Activated CD4-positive, alpha-beta T cell treated with anti-CD3 and anti-CD28 coated beads for 36 hours (primary cell): ENCODE measurements at regions of chr7 and their contacts with region 1.

Region 1: GRCh38 chr7:104923010-104923421 is 91.0 kb upstream of the KMT2E start:
- DNase-seq: peak; percentile 89
- ATAC-seq: peak; percentile 99
- H3K4me3 Mint-ChIP-seq: no peak overlapping the region
- H3K27ac Mint-ChIP-seq: peak overlapping the region; percentile 59
- H3K4me1 Mint-ChIP-seq: peaks cover 4% of the 10 kb centered on the region
- H3K27me3 Mint-ChIP-seq: no peaks in the 10 kb centered on the region

Region 2: GRCh38 chr7:104643587-104644217 is 279.3 kb before region 1 on chr7:
- CTCF ChIA-PET with region 1: interaction called, 5 read pairs
- POLR2A ChIA-PET with region 1: no interaction called
- intact Hi-C with region 1: loop called (anchors 5 kb)
- DNase-seq: peak; percentile 22
- ATAC-seq: no peak
- H3K4me3 Mint-ChIP-seq: no peak overlapping the region
- H3K27ac Mint-ChIP-seq: no peak overlapping the region
- H3K4me1 Mint-ChIP-seq: no peaks in the 10 kb centered on the region
- H3K27me3 Mint-ChIP-seq: peaks cover 9% of the 10 kb centered on the region

Region 3: GRCh38 chr7:104908636-104909035 is 14.4 kb before region 1 on chr7:
- CTCF ChIA-PET with region 1: interaction called, 13 read pairs
- POLR2A ChIA-PET with region 1: no interaction called
- intact Hi-C with region 1: no loop called
- DNase-seq: no peak
- ATAC-seq: no peak
- H3K4me3 Mint-ChIP-seq: no peak overlapping the region
- H3K27ac Mint-ChIP-seq: no peak overlapping the region
- H3K4me1 Mint-ChIP-seq: no peaks in the 10 kb centered on the region
- H3K27me3 Mint-ChIP-seq: peaks cover 7% of the 10 kb centered on the region

Region 4: GRCh38 chr7:105118612-105119600 is 195.9 kb after region 1 on chr7:
- CTCF ChIA-PET with region 1: interaction called, 3 read pairs
- POLR2A ChIA-PET with region 1: no interaction called
- intact Hi-C with region 1: loop called in 1 of 2 experiments (anchors 5 kb)
- DNase-seq: no peak
- ATAC-seq: peak; percentile 24
- H3K4me3 Mint-ChIP-seq: no peak overlapping the region
- H3K27ac Mint-ChIP-seq: peak overlapping the region; percentile 58
- H3K4me1 Mint-ChIP-seq: peaks cover 30% of the 10 kb centered on the region
- H3K27me3 Mint-ChIP-seq: no peaks in the 10 kb centered on the region

Region 5: GRCh38 chr7:105157278-105157677 is 234.3 kb after region 1 on chr7:
- CTCF ChIA-PET with region 1: no interaction called
- POLR2A ChIA-PET with region 1: no interaction called
- intact Hi-C with region 1: no loop called
- DNase-seq: no peak
- ATAC-seq: peak; percentile 14
- H3K4me3 Mint-ChIP-seq: no peak overlapping the region
- H3K27ac Mint-ChIP-seq: peak overlapping the region; percentile 8
- H3K4me1 Mint-ChIP-seq: peaks cover 16% of the 10 kb centered on the region
- H3K27me3 Mint-ChIP-seq: no peaks in the 10 kb centered on the region

Region 6: GRCh38 chr7:105429746-105430612 is 507.0 kb after region 1 on chr7:
- CTCF ChIA-PET with region 1: interaction called, 3 read pairs
- POLR2A ChIA-PET with region 1: no interaction called
- intact Hi-C with region 1: loop called (anchors 1 to 2 kb)
- DNase-seq: peak; percentile 74
- ATAC-seq: no peak
- H3K4me3 Mint-ChIP-seq: no peak overlapping the region
- H3K27ac Mint-ChIP-seq: no peak overlapping the region
- H3K4me1 Mint-ChIP-seq: peaks cover 19% of the 10 kb centered on the region
- H3K27me3 Mint-ChIP-seq: no peaks in the 10 kb centered on the region